ENCODE measurements at regions of chr6 and their contacts with region 1.

Region 1: DNA sequence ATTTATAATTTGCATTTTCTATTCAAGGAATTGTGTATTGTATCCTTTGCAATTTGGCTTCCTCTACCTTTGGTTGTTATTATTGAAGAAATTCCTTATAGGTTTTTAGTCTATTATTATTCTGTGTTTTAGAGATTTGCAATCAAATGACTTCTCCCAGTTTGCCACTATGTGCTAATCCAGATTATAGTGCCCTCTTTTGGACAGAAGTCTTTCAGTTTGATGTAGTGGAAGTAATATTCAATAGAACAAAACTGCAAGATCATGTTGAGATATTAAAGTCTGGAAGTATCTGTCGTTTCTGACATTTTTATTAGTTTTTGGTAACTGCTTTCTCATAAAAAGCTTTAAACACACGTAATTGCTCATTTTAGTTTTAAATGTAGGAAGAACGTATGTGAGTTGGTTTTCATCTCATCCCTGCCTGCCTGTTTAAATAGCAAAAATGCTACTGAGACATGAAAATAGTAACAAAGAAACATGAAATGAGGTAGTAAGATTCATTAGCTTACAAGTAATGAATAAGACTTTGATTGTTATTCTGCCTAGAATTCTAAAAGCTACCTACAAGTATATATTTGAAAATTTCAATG is 72.8 kb downstream of the RTN4IP1 start:
- DNase-seq: no peak
- H3K4me3 ChIP-seq: no peak overlapping the region
- CTCF ChIP-seq: peak; percentile 28

Region 2: GRCh38 chr6:106512048-106512967 is 44.2 kb before region 1 on chr6:
- CTCF ChIA-PET with region 1: interaction called, 25 read pairs
- POLR2A ChIA-PET with region 1: no interaction called
- DNase-seq: no peak
- H3K4me3 ChIP-seq: peak overlapping the region; percentile 76
- CTCF ChIP-seq: peak; percentile 35

Region 3: GRCh38 chr6:106568530-106568929 is 12.1 kb after region 1 on chr6:
- CTCF ChIA-PET with region 1: interaction called, 74 read pairs
- POLR2A ChIA-PET with region 1: no interaction called
- DNase-seq: no peak
- H3K4me3 ChIP-seq: no peak overlapping the region
- CTCF ChIP-seq: no peak

Region 4: DNA sequence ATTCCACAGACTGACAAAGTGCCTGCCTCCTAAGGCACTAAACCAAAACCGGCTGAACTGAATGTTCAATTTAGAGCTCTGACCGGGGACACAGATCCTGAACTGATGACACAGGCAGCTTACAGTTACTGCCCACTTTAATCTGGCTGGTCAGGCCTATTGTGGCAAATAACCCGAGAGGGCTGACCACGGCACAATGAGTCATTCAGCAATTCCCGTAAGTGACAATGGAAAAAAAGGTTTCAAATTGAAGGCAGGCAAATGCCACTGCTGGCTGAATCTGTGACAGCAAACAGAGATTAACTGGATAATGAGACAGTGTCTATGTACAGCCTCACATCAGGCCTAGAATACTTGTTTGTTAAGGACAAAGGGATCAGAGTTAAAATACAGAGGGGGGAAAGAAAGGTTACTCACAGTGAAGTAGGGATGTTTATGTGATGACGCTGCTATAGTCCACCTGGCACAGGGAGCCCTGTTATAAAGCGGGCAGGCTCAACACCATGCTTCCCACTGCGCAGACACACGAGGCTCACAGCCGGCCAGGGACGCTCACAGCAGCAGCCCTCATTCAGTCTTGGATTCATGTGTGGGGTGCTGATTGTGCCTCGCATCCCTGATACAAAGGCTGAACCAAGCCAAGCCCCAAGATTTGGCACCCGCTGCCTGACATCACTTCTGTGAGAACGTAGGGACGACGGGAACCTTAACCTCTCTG is 18.4 kb after region 1 on chr6:
- CTCF ChIA-PET with region 1: interaction called, 18 read pairs
- POLR2A ChIA-PET with region 1: no interaction called
- DNase-seq: no peak
- H3K4me3 ChIP-seq: no peak overlapping the region
- CTCF ChIP-seq: no peak